ENCODE measurements at regions of chr6 and their contacts with region 1.

Region 1: GRCh38 chr6:25889877-25890853 is 16.1 kb upstream of the SLC17A3 start:
- DNase-seq: peak; percentile 40
- H3K4me3 Mint-ChIP-seq: no peak overlapping the region
- H3K27ac Mint-ChIP-seq: no peak overlapping the region
- H3K4me1 Mint-ChIP-seq: no peaks in the 10 kb centered on the region
- H3K27me3 Mint-ChIP-seq: peaks cover 5% of the 10 kb centered on the region

Region 2: GRCh38 chr6:25717866-25718740 is 172.1 kb before region 1 on chr6:
- CTCF ChIA-PET with region 1: interaction called, 18 read pairs
- DNase-seq: no peak
- H3K4me3 Mint-ChIP-seq: no peak overlapping the region
- H3K27ac Mint-ChIP-seq: no peak overlapping the region
- H3K4me1 Mint-ChIP-seq: no peaks in the 10 kb centered on the region
- H3K27me3 Mint-ChIP-seq: peaks cover 14% of the 10 kb centered on the region

Measured in activated naive CD4-positive, alpha-beta T cell treated with anti-CD3 and anti-CD28 coated beads, Interleukin-2, amount 10 ng/mL, durations not matched to agents 7 days and 5 days (primary cell).